CD8-positive, alpha-beta T cell (primary cell): ENCODE measurements at regions of chr7 and their contacts with region 1.

Region 1: GRCh38 chr7:156969972-156970420 is 20.5 kb downstream of the NOM1 start:
- DNase-seq: peak in 1 of 9 experiments; percentile 31
- ATAC-seq: no peak
- H3K4me3 ChIP-seq: no peak overlapping the region
- H3K4me3 Mint-ChIP-seq: no peak overlapping the region
- H3K27ac ChIP-seq: no peak overlapping the region
- H3K27ac Mint-ChIP-seq: no peak overlapping the region
- H3K4me1 ChIP-seq: no peaks in the 10 kb centered on the region
- H3K4me1 Mint-ChIP-seq: no peaks in the 10 kb centered on the region
- H3K27me3 ChIP-seq: no peaks in the 10 kb centered on the region
- H3K27me3 Mint-ChIP-seq: no peaks in the 10 kb centered on the region
- CTCF ChIP-seq: peak; percentile 44

Region 2: DNA sequence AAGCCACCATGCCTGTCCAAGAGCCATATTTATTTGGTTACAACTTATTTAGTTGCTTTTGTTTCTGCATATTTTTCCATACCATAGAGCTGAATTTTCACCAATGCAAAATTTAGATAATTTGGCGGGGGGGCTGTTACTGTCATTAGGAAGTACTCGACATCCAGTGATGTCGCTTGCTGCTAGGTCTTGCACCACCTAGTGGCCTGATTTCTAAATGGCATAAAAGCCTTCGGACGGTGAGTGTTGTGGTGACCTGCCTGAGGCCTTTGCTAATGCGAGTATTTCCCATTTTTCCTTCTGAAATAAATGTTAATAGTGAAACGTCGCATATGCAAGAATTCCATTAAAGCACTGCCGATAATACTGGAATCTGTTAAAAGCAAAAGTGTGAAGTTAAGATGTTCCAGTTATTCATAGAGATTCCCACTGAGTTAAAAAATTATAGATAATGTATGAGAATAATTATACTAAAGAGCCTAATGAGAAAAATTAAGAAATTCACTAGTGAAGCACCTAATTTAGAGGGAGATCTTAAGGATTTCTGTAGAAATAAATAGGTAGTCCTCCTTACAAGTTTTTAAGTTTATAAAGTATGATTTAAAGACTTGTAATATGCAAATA is 280.7 kb after region 1 on chr7:
- CTCF ChIA-PET with region 1: interaction called, 3 read pairs
- POLR2A ChIA-PET with region 1: no interaction called
- intact Hi-C with region 1: loop called (anchors 5 to 10 kb)
- DNase-seq: peak in 8 of 9 experiments; percentile 22 to 73 (median 48)
- ATAC-seq: peak; percentile 66
- H3K4me3 ChIP-seq: no peak overlapping the region
- H3K4me3 Mint-ChIP-seq: no peak overlapping the region
- H3K27ac ChIP-seq: no peak overlapping the region
- H3K27ac Mint-ChIP-seq: no peak overlapping the region
- H3K4me1 ChIP-seq: no peaks in the 10 kb centered on the region
- H3K4me1 Mint-ChIP-seq: peaks cover 2% of the 10 kb centered on the region
- H3K27me3 ChIP-seq: no peaks in the 10 kb centered on the region
- H3K27me3 Mint-ChIP-seq: no peaks in the 10 kb centered on the region
- CTCF ChIP-seq: peak; percentile 71

Region 3: DNA sequence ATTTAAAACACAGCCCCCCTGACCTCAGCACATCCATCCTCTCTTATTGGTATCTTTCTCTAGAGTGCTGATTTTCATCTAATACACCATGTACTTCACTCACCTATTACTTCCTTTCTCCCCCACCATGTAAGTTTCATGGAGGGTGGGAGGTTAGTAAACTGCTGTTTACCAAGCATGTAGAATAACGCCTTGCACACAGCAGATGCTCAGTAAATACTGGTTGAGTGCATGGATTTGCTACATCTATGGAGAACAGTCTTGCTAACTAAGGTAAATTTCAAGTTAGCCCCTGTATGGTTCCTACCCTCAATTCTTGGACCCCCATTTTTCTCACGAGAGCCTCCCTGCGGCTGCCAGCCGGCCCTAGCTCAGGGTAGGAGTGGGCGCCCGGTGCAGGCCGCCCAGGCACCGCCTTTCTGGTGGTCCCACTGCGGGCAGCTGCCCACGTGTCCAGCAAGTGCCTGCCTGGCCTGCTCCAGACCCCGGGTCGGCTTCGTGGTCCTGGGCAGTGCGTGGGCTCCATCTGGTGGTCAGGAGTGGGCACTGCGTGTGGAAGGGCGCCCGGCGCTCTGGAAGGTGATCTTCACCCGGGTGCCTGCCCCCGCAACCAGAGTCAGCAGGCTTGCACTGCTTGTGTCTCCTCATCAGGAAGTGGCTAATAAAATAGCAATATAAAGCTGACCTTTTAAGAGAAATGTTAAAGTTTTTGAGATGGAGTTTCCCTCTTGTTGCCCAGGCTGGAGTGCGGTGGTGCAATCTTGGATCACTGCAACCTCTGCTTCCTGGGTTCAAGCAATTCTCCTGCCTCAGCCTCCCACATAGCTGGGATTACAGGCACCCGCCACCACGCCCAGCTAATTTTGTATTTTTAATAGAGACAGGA is 303.5 kb after region 1 on chr7:
- CTCF ChIA-PET with region 1: interaction called, 3 read pairs
- POLR2A ChIA-PET with region 1: no interaction called
- intact Hi-C with region 1: loop called in 1 of 2 experiments (anchors 2 kb)
- DNase-seq: peak; percentile 32 to 80 (median 62)
- ATAC-seq: peak; percentile 92
- H3K4me3 ChIP-seq: no peak overlapping the region
- H3K4me3 Mint-ChIP-seq: no peak overlapping the region
- H3K27ac ChIP-seq: peak overlapping the region in 1 of 2 experiments; percentile 8
- H3K27ac Mint-ChIP-seq: peak overlapping the region; percentile 72
- H3K4me1 ChIP-seq: peaks cover 21% of the 10 kb centered on the region
- H3K4me1 Mint-ChIP-seq: peaks cover 24% of the 10 kb centered on the region
- H3K27me3 ChIP-seq: peaks cover 0 to 3% of the 10 kb centered on the region in 2 experiments
- H3K27me3 Mint-ChIP-seq: peaks cover 2% of the 10 kb centered on the region
- CTCF ChIP-seq: peak; percentile 90